Dendritic cell treated with granulocyte-macrophage colony-stimulating factor and Interleukin-4, amounts not matched to agents 40 ng/mL and 50 ng/mL, for 4 days (primary cell): ENCODE measurements at regions of chr11 and their contacts with region 1.

Region 1: GRCh38 chr11:74581954-74582547 is 10.3 kb upstream of the POLD3 start:
- H3K4me3 Mint-ChIP-seq: no peak overlapping the region
- H3K27ac Mint-ChIP-seq: peak overlapping the region; percentile 88
- H3K4me1 Mint-ChIP-seq: peaks cover 41% of the 10 kb centered on the region
- H3K27me3 Mint-ChIP-seq: peaks cover 1% of the 10 kb centered on the region

Region 2: DNA sequence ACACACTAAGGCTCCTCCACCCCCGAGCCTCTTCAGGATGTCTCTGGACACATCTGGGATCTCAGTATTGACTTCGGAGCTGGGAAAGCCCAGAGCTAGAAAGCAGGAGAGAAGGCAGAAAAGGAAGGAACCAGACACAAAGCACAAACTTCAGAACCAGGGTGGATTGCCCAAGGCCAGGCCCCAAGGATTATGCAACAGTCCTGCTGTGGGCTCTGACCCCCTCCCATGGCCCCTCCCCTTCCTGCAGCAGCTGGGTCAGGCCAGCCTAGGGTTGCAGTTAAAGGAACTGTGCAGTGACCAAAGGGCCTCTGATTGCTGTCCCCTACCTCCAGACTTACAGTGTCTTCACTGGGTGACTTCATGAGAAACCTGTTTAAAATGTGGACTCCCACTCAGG is 120.0 kb before region 1 on chr11:
- intact Hi-C with region 1: loop called (anchors 5 kb)
- H3K4me3 Mint-ChIP-seq: no peak overlapping the region
- H3K27ac Mint-ChIP-seq: no peak overlapping the region
- H3K4me1 Mint-ChIP-seq: peaks cover 50% of the 10 kb centered on the region
- H3K27me3 Mint-ChIP-seq: no peaks in the 10 kb centered on the region